HEK293 (cell line): ENCODE measurements at regions of chr6 and their contacts with region 1.

Region 1: GRCh38 chr6:43937236-43938164 is 167.5 kb downstream of the VEGFA start:
- H3K4me3 ChIP-seq: no peak overlapping the region
- H3K27ac ChIP-seq: no peak overlapping the region
- H3K4me1 ChIP-seq: peaks cover 15% of the 10 kb centered on the region
- CTCF ChIP-seq: no peak

Region 2: GRCh38 chr6:44010411-44011349 is 73.2 kb after region 1 on chr6:
- CTCF ChIA-PET with region 1: interaction called, 10 read pairs
- POLR2A ChIA-PET with region 1: no interaction called
- H3K4me3 ChIP-seq: no peak overlapping the region
- H3K27ac ChIP-seq: no peak overlapping the region
- H3K4me1 ChIP-seq: no peaks in the 10 kb centered on the region
- CTCF ChIP-seq: no peak

Region 3: GRCh38 chr6:44257025-44257752 is 319.7 kb after region 1 on chr6 and contains the start of gene SLC35B2:
- CTCF ChIA-PET with region 1: no interaction called
- POLR2A ChIA-PET with region 1: no interaction called
- H3K4me3 ChIP-seq: peak within 1 kb of the TSS; percentile 82
- H3K27ac ChIP-seq: peak within 1 kb of the TSS; percentile 65; the same call in 1 of the 2 replicates
- H3K4me1 ChIP-seq: no peaks in the 10 kb centered on the region
- CTCF ChIP-seq: 0 out of 2 replicates have a peak, but pooled peaks have one; percentile 32